Head of caudate nucleus (tissue), 42 donors: ENCODE measurements at regions of chr12 and their contacts with region 1.

Region 1: GRCh38 chr12:122500685-122501488 is at the start of gene ZCCHC8:
- DNase-seq: peak; percentile 94 to 99 (median 98)

Region 2: GRCh38 chr12:122225683-122226407 is 275.0 kb before region 1 on chr12 and contains the start of gene DIABLO:
- intact Hi-C with region 1: loop called (anchors 10 kb)
- DNase-seq: peak; percentile 99 to 100 (median 100)

Region 3: GRCh38 chr12:122449353-122449752 is 51.5 kb before region 1 on chr12:
- intact Hi-C with region 1: no loop called
- DNase-seq: no peak

Region 4: GRCh38 chr12:122526683-122527477 is 26.0 kb after region 1 on chr12 and contains the starts of genes KNTC1 and RSRC2:
- intact Hi-C with region 1: loop called (anchors 2 kb)
- DNase-seq: peak; percentile 93 to 100 (median 98)